Naive thymus-derived CD4-positive, alpha-beta T cell (primary cell): ENCODE measurements at regions of chr5 and their contacts with region 1.

Region 1: DNA sequence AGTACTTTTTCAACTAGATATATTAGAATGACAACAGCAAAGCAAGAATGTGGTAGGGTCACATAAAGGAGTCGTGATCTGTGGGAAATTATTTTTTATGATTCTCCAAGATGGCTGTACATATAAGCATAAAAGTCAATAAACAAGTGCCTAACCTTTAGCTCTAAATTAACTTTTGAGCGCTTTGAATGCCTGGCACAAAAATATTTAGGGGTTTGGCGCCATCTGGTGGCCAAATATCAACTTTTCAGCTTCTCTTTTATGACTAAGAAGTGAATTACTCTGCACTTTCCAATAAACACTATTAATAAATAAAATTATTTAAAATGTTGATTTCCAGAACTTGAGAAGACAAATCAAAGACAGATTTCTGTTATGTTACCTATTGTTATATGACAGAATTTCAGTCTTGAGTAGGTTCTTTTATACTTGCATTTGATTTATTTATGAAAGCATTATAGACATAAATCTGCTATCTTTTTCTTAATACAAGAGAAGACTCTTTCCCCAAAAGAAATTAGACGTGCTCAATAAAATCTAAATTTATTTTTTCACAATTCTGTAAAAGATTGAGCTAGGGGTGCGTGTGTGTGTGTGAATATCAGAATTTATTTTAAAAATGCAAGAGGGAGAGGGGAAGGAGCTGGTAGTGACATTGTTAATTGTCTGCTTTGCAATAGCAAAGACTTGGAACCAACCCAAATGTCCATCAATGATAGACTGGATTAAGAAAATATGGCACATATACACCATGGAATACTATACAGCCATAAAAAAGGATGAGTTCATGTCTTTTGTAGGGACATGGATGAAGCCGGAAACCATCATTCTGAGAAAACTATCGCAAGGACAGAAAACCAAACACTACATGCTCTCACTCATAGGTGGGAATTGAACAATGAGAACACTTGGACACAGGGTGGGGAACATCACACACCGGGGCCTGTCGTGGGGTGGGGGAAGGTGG is 36.7 kb upstream of the ARRDC3 start:
- DNase-seq: peak; percentile 40 to 72 (median 58)
- ATAC-seq: peak; percentile 60
- H3K4me3 ChIP-seq: no peak overlapping the region
- H3K4me3 Mint-ChIP-seq: peak overlapping the region in 1 of 10 donors; percentile 15
- H3K27ac ChIP-seq: no peak overlapping the region
- H3K27ac Mint-ChIP-seq: no peak overlapping the region
- H3K4me1 ChIP-seq: no peaks in the 10 kb centered on the region
- H3K4me1 Mint-ChIP-seq: peaks cover 0 to 30% (median 20%) of the 10 kb centered on the region in 7 donors
- H3K27me3 ChIP-seq: no peaks in the 10 kb centered on the region
- H3K27me3 Mint-ChIP-seq: peaks cover 0 to 5% (median 0%) of the 10 kb centered on the region in 5 donors

Region 2: GRCh38 chr5:90585337-90585986 is 834.4 kb before region 1 on chr5:
- CTCF ChIA-PET with region 1: no interaction called
- POLR2A ChIA-PET with region 1: no interaction called
- intact Hi-C with region 1: no loop called
- DNase-seq: no peak
- ATAC-seq: no peak
- H3K4me3 ChIP-seq: no peak overlapping the region
- H3K4me3 Mint-ChIP-seq: no peak overlapping the region
- H3K27ac ChIP-seq: no peak overlapping the region
- H3K27ac Mint-ChIP-seq: no peak overlapping the region
- H3K4me1 ChIP-seq: no peaks in the 10 kb centered on the region
- H3K4me1 Mint-ChIP-seq: no peaks in the 10 kb centered on the region
- H3K27me3 ChIP-seq: peaks cover 0 to 6% of the 10 kb centered on the region in 2 donors
- H3K27me3 Mint-ChIP-seq: peaks cover 0 to 61% (median 47%) of the 10 kb centered on the region in 5 donors

Region 3: GRCh38 chr5:90802474-90803317 is 617.2 kb before region 1 on chr5:
- CTCF ChIA-PET with region 1: interaction called, 7 read pairs
- POLR2A ChIA-PET with region 1: no interaction called
- intact Hi-C with region 1: loop called (anchors 1 to 2 kb)
- DNase-seq: peak in 2 of 9 donors; percentile 6 to 10
- ATAC-seq: peak; percentile 55
- H3K4me3 ChIP-seq: no peak overlapping the region
- H3K4me3 Mint-ChIP-seq: no peak overlapping the region
- H3K27ac ChIP-seq: no peak overlapping the region
- H3K27ac Mint-ChIP-seq: no peak overlapping the region
- H3K4me1 ChIP-seq: no peaks in the 10 kb centered on the region
- H3K4me1 Mint-ChIP-seq: no peaks in the 10 kb centered on the region
- H3K27me3 ChIP-seq: no peaks in the 10 kb centered on the region
- H3K27me3 Mint-ChIP-seq: peaks cover 2 to 17% (median 4%) of the 10 kb centered on the region in 5 donors

Region 4: GRCh38 chr5:90866333-90866732 is 553.5 kb before region 1 on chr5:
- CTCF ChIA-PET with region 1: interaction called, 44 read pairs
- POLR2A ChIA-PET with region 1: interaction called, 3 read pairs
- intact Hi-C with region 1: loop called (anchors 1 kb)
- DNase-seq: peak in 6 of 9 donors; percentile 11 to 49 (median 38)
- ATAC-seq: peak; percentile 60
- H3K4me3 ChIP-seq: no peak overlapping the region
- H3K4me3 Mint-ChIP-seq: no peak overlapping the region
- H3K27ac ChIP-seq: no peak overlapping the region
- H3K27ac Mint-ChIP-seq: no peak overlapping the region
- H3K4me1 ChIP-seq: peaks cover 0 to 6% of the 10 kb centered on the region in 2 donors
- H3K4me1 Mint-ChIP-seq: peaks cover 0 to 19% (median 9%) of the 10 kb centered on the region in 7 donors
- H3K27me3 ChIP-seq: no peaks in the 10 kb centered on the region
- H3K27me3 Mint-ChIP-seq: peaks cover 0 to 16% (median 4%) of the 10 kb centered on the region in 5 donors

Region 5: DNA sequence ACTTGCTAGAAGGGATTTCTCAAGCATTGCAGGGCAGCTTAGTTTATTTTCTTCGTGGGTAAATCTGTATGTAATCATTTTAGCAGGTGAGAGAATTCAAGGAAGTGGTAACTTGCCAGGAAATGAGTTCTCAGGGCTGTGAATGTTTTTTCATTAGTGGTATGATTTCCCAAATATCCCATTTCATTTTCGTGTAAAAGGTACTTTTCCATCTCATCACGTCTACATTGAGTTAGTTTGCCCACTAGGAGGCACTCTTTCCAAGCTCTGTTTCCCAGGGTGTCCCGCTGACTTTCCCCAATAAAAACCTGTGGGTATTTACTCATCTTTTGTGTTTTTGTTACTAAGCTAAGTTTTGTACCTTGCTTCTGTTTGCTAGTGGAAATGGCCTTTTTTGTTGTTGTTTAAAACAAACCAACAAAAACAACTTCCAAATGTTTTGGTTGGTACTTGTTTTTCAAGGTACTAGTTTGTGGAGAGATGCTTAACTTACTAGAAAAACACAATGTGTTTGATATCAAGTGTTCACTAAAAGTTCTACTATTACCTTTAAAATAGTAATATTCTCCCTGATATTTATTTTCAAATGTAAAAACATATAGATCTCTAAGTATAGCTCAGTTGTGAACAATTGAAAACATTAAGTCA is 487.7 kb before region 1 on chr5:
- CTCF ChIA-PET with region 1: interaction called, 29 read pairs
- POLR2A ChIA-PET with region 1: no interaction called
- intact Hi-C with region 1: loop called (anchors 1 kb)
- DNase-seq: peak in 6 of 9 donors; percentile 27 to 46 (median 31)
- ATAC-seq: no peak
- H3K4me3 ChIP-seq: no peak overlapping the region
- H3K4me3 Mint-ChIP-seq: no peak overlapping the region
- H3K27ac ChIP-seq: no peak overlapping the region
- H3K27ac Mint-ChIP-seq: no peak overlapping the region
- H3K4me1 ChIP-seq: no peaks in the 10 kb centered on the region
- H3K4me1 Mint-ChIP-seq: peaks cover 0 to 5% (median 0%) of the 10 kb centered on the region in 7 donors
- H3K27me3 ChIP-seq: peaks cover 0 to 3% of the 10 kb centered on the region in 2 donors
- H3K27me3 Mint-ChIP-seq: peaks cover 3 to 14% (median 8%) of the 10 kb centered on the region in 5 donors

Region 6: DNA sequence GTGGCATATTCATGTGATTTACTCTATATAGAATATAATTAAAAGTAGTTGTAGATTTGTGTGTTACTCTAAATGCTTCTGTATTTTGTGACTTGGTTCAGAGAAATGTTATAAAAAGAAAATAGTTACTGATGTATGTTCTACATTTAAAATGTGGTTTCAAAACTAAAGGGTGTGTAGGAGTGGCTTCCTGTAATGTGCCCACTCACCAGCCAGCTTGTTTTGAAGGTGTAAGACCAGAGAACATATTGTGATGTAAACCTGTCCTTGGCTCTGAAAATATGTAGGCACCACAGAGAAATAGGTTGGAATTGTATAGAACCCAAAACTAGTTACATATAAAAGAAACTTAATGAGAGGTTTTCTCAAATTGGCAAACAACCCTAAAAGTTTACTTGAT is 14.5 kb after region 1 on chr5:
- CTCF ChIA-PET with region 1: interaction called, 19 read pairs
- POLR2A ChIA-PET with region 1: no interaction called
- intact Hi-C with region 1: no loop called
- DNase-seq: peak in 5 of 9 donors; percentile 13 to 58 (median 22)
- ATAC-seq: peak; percentile 76
- H3K4me3 ChIP-seq: no peak overlapping the region
- H3K4me3 Mint-ChIP-seq: peak overlapping the region in 8 of 10 donors; percentile 9 to 80 (median 66)
- H3K27ac ChIP-seq: peak overlapping the region; percentile 35
- H3K27ac Mint-ChIP-seq: peak overlapping the region in 8 of 9 donors; percentile 88 to 95 (median 90)
- H3K4me1 ChIP-seq: peaks cover 15 to 16% of the 10 kb centered on the region in 2 donors
- H3K4me1 Mint-ChIP-seq: peaks cover 9 to 56% (median 43%) of the 10 kb centered on the region in 7 donors
- H3K27me3 ChIP-seq: no peaks in the 10 kb centered on the region
- H3K27me3 Mint-ChIP-seq: no peaks in the 10 kb centered on the region